ENCODE measurements at regions of chr17 and their contacts with region 1.

Region 1: GRCh38 chr17:32877164-32877764 is 340 bp upstream of the MYO1D start:
- DNase-seq: peak; percentile 95
- H3K4me3 Mint-ChIP-seq: peak overlapping the region; percentile 50
- H3K27ac Mint-ChIP-seq: peak overlapping the region; percentile 76
- H3K4me1 Mint-ChIP-seq: peaks cover 32% of the 10 kb centered on the region
- H3K27me3 Mint-ChIP-seq: no peaks in the 10 kb centered on the region

Region 2: GRCh38 chr17:32486111-32486700 is 391.1 kb before region 1 on chr17:
- CTCF ChIA-PET with region 1: interaction called, 6 read pairs
- POLR2A ChIA-PET with region 1: no interaction called
- intact Hi-C with region 1: loop called (anchors 5 kb)
- DNase-seq: peak; percentile 73
- H3K4me3 Mint-ChIP-seq: peak overlapping the region; percentile 54
- H3K27ac Mint-ChIP-seq: peak overlapping the region; percentile 18
- H3K4me1 Mint-ChIP-seq: peaks cover 46% of the 10 kb centered on the region
- H3K27me3 Mint-ChIP-seq: no peaks in the 10 kb centered on the region

Region 3: GRCh38 chr17:32805029-32805976 is 72.0 kb before region 1 on chr17:
- CTCF ChIA-PET with region 1: interaction called, 12 read pairs
- POLR2A ChIA-PET with region 1: no interaction called
- intact Hi-C with region 1: no loop called
- DNase-seq: no peak
- H3K4me3 Mint-ChIP-seq: no peak overlapping the region
- H3K27ac Mint-ChIP-seq: no peak overlapping the region
- H3K4me1 Mint-ChIP-seq: peaks cover 8% of the 10 kb centered on the region
- H3K27me3 Mint-ChIP-seq: peaks cover 1% of the 10 kb centered on the region

Region 4: GRCh38 chr17:32903774-32904673 is 26.8 kb after region 1 on chr17:
- CTCF ChIA-PET with region 1: interaction called, 99 read pairs
- POLR2A ChIA-PET with region 1: interaction called, 3 read pairs
- intact Hi-C with region 1: no loop called
- DNase-seq: peak; percentile 74
- H3K4me3 Mint-ChIP-seq: no peak overlapping the region
- H3K27ac Mint-ChIP-seq: peak overlapping the region; percentile 64
- H3K4me1 Mint-ChIP-seq: peaks cover 17% of the 10 kb centered on the region
- H3K27me3 Mint-ChIP-seq: peaks cover 22% of the 10 kb centered on the region

Region 5: DNA sequence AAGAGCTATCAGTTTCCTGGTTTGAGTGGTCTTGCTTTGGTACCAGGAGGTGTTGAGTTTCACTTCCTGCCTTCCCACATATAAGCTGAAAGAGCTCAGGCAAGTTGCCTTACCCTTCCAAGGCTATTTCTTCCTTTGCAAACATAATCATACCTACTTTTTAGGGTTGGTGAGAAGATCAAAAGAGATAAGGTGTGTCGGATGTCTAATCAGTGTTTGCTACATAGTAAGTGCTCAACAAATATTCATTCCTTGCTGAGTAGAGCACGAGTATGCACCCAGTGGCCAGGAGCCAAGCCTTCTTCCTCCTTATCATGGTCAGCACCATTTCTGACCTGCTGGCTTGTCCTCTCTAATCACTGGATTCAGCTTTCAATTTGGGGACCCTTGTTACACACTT is 38.0 kb after region 1 on chr17:
- CTCF ChIA-PET with region 1: interaction called, 99 read pairs
- POLR2A ChIA-PET with region 1: interaction called, 10 read pairs
- intact Hi-C with region 1: loop called (anchors 1 kb)
- DNase-seq: no peak
- H3K4me3 Mint-ChIP-seq: no peak overlapping the region
- H3K27ac Mint-ChIP-seq: no peak overlapping the region
- H3K4me1 Mint-ChIP-seq: peaks cover 41% of the 10 kb centered on the region
- H3K27me3 Mint-ChIP-seq: peaks cover 4% of the 10 kb centered on the region

Region 6: DNA sequence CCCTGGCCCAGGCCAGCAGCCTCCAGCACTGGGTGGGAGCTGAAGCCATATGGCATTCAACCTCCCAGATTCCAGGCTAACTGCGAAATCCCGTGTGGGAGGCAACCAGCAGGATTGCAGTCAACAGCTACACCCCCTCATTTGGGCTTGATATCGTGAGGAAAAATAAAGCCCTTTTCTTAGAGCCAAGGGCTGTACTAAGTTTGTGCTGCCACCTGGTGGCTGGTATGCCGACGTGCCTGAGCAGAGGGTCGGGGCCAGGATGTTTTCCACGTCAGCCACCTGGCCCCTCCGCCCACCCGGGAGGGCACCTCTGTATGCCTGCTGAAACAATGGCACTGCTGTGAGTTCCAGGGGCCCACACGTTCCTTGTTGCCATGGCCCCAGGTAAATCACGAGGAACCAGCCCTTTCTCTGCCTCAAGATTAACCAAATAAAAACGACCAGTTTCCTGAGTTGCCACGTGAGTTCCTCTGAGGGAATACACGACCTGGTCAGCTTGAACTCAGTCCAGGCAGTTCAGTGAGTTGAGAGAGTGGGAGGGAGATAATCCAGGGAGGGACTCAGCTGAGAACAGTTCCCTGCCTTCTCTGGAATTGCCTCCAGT is 59.7 kb after region 1 on chr17:
- CTCF ChIA-PET with region 1: interaction called, 43 read pairs
- POLR2A ChIA-PET with region 1: no interaction called
- intact Hi-C with region 1: loop called (anchors 2 kb)
- DNase-seq: peak; percentile 74
- H3K4me3 Mint-ChIP-seq: no peak overlapping the region
- H3K27ac Mint-ChIP-seq: no peak overlapping the region
- H3K4me1 Mint-ChIP-seq: peaks cover 6% of the 10 kb centered on the region
- H3K27me3 Mint-ChIP-seq: peaks cover 27% of the 10 kb centered on the region